AG04449 (cell line): ENCODE measurements at regions of chrX and their contacts with region 1.

Region 1: GRCh38 chrX:132219343-132219768 is at the start of gene RAP2C:
- DNase-seq: no peak
- H3K4me3 ChIP-seq: peak within 1 kb of the TSS; percentile 63
- CTCF ChIP-seq: peak; percentile 66

Region 2: GRCh38 chrX:132092439-132093065 is 126.8 kb before region 1 on chrX:
- CTCF ChIA-PET with region 1: interaction called, 71 read pairs
- POLR2A ChIA-PET with region 1: no interaction called
- DNase-seq: no peak
- H3K4me3 ChIP-seq: no peak overlapping the region
- CTCF ChIP-seq: peak; percentile 56

Region 3: GRCh38 chrX:132119821-132120515 is 99.4 kb before region 1 on chrX:
- CTCF ChIA-PET with region 1: no interaction called
- POLR2A ChIA-PET with region 1: no interaction called
- DNase-seq: no peak
- H3K4me3 ChIP-seq: no peak overlapping the region
- CTCF ChIP-seq: no peak

Region 4: GRCh38 chrX:132199941-132200340 is 19.4 kb before region 1 on chrX:
- CTCF ChIA-PET with region 1: interaction called, 13 read pairs
- POLR2A ChIA-PET with region 1: no interaction called
- DNase-seq: no peak
- H3K4me3 ChIP-seq: no peak overlapping the region
- CTCF ChIP-seq: no peak